ENCODE measurements at regions of chr10 and their contacts with region 1.

Region 1: DNA sequence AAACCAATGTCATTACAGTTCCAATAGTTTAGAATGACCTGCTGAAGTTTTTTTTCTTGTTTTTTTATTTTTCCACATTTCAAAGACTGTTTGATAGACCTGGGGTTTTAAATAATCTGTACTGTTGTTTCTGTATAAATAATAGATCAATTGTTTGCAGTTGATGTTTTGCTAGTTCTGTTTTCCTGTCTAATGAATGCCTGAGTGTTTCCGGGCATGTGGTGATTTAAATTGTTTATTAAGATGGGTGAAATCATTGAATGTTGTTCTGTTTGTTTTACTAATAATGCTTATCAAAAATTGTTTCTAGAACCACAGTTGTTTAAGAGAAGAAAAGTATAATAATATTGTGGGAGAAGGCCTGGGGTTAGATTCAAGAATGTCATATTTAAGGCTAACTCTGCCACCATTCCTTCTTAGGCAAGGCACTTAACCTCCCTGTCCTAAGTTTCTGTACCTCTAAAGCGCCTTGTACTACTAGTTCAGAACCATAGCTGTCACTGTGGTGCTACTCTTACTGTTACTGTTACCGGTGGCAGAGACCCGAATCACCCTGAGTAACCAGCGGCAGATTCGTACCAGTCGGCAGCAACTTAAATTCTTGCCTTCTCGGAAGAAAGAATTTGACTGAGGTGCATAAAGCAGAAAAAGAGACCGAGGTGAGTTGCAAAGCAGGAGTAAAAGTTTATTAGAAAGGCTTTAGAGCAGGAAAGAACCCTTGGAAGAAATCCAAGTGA is 1014.1 kb downstream of the REEP3 start:
- DNase-seq: no peak
- H3K4me3 ChIP-seq: no peak overlapping the region
- H3K27ac ChIP-seq: no peak overlapping the region
- H3K4me1 ChIP-seq: no peaks in the 10 kb centered on the region
- H3K27me3 ChIP-seq: no peaks in the 10 kb centered on the region
- CTCF ChIP-seq: no peak

Region 2: GRCh38 chr10:64408391-64409183 is 126.7 kb before region 1 on chr10:
- CTCF ChIA-PET with region 1: no interaction called
- POLR2A ChIA-PET with region 1: no interaction called
- intact Hi-C with region 1: no loop called
- DNase-seq: no peak
- H3K4me3 ChIP-seq: no peak overlapping the region
- H3K27ac ChIP-seq: no peak overlapping the region
- H3K4me1 ChIP-seq: no peaks in the 10 kb centered on the region
- H3K27me3 ChIP-seq: no peaks in the 10 kb centered on the region
- CTCF ChIP-seq: no peak

Region 3: DNA sequence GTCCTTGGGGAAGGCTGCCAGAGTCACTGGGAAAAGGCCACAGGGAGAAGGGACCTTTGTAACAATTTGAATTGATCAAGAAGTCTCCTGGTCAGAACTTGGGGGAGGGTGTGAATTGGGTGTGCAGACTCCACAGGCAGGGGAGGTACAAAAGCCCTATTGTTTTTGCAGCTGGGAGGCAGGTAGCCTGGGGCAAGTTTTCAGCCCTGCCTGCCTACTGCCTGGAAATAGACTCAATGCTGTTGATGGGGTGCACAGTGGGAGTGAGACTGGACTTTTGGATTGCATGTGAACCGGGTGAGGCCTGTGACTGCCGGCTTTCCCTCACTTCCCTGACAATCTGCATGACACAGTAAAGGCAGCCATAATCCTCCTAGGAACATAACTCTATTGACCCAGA is 67.1 kb before region 1 on chr10:
- CTCF ChIA-PET with region 1: no interaction called
- POLR2A ChIA-PET with region 1: no interaction called
- intact Hi-C with region 1: loop called (anchors 2 kb)
- DNase-seq: peak in 1 of 2 experiments; percentile 4
- H3K4me3 ChIP-seq: no peak overlapping the region
- H3K27ac ChIP-seq: no peak overlapping the region
- H3K4me1 ChIP-seq: no peaks in the 10 kb centered on the region
- H3K27me3 ChIP-seq: no peaks in the 10 kb centered on the region
- CTCF ChIP-seq: no peak

Measured in PC-9 (cell line).